ENCODE measurements at regions of chr3 and their contacts with region 1.

Region 1: GRCh38 chr3:112327371-112327951 is 5.5 kb upstream of the CD200 start:
- DNase-seq: peak; percentile 68
- ATAC-seq: peak; percentile 91
- H3K4me3 ChIP-seq: no peak overlapping the region
- H3K27ac ChIP-seq: no peak overlapping the region
- H3K4me1 ChIP-seq: no peaks in the 10 kb centered on the region
- H3K27me3 ChIP-seq: peaks cover 5% of the 10 kb centered on the region; the same call in 1 of the 2 replicates
- CTCF ChIP-seq: peak; percentile 91
- POLR2A ChIP-seq: no peak
- RAD21 ChIP-seq: peak; percentile 91

Region 2: GRCh38 chr3:112111785-112112402 is 215.6 kb before region 1 on chr3:
- CTCF ChIA-PET with region 1: no interaction called
- POLR2A ChIA-PET with region 1: no interaction called
- dilution Hi-C with region 1: no loop called
- in situ Hi-C with region 1: no loop called
- intact Hi-C with region 1: loop called (anchors 2 kb)
- DNase-seq: peak; percentile 77
- ATAC-seq: peak; percentile 96
- H3K4me3 ChIP-seq: no peak overlapping the region
- H3K27ac ChIP-seq: no peak overlapping the region
- H3K4me1 ChIP-seq: no peaks in the 10 kb centered on the region
- H3K27me3 ChIP-seq: no peaks in the 10 kb centered on the region
- CTCF ChIP-seq: peak; percentile 72
- POLR2A ChIP-seq: no peak
- RAD21 ChIP-seq: peak; percentile 78

Region 3: GRCh38 chr3:112437146-112438022 is 109.9 kb after region 1 on chr3:
- CTCF ChIA-PET with region 1: interaction called, 7 read pairs
- POLR2A ChIA-PET with region 1: no interaction called
- dilution Hi-C with region 1: no loop called
- in situ Hi-C with region 1: no loop called
- intact Hi-C with region 1: loop called (anchors 1 kb)
- DNase-seq: peak; percentile 58
- ATAC-seq: peak; percentile 67
- H3K4me3 ChIP-seq: no peak overlapping the region
- H3K27ac ChIP-seq: no peak overlapping the region
- H3K4me1 ChIP-seq: no peaks in the 10 kb centered on the region
- H3K27me3 ChIP-seq: no peaks in the 10 kb centered on the region; the same call in 1 of the 2 replicates
- CTCF ChIP-seq: peak; percentile 56
- POLR2A ChIP-seq: no peak
- RAD21 ChIP-seq: peak; percentile 71

Measured in IMR-90 (cell line).